Activated naive CD4-positive, alpha-beta T cell treated with anti-CD3 and anti-CD28 coated beads for 36 hours (primary cell): ENCODE measurements at regions of chr2 and their contacts with region 1.

Region 1: DNA sequence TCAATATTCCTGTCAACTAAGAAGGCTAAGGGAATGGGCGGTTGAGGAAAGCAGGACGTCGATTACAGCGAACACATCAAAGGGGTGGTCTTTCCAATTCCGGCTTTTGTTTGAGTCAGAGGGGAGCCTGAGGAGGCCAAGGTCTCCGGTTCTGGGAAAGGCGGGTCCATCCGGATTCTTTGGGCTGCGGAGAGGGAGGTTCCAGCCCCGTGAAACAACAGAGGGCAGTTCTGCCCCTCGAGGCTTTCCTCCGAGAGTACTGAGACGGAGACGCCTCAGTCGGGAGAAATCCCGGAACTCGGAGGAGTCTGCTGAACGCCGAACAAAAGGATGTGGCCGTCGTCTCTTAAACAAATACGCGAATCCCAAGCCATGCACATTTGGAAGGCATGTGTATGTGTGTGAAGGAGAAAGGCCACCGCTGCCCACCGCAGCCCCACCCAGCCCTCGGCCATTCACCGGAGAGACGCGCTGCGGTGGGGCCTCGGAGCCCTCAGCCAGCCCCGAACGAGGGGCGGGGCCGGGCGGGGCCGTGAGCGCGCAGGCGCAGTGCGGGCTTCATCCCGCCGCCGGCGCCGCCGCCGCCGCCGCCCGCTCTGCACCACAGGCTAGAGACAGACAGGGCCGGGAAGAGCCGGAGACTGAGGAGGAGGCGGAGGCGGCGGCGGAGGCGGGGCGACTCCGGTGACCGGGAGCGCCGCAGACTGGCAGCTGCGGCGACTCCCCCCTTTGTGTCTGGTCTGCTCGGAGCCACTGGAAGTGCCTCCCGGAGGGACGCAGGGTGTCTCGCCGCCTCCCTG is at the start of gene BMPR2:
- DNase-seq: peak; percentile 79
- H3K4me3 Mint-ChIP-seq: peak within 1 kb of the TSS; percentile 96
- H3K27ac Mint-ChIP-seq: peak within 1 kb of the TSS; percentile 71
- H3K4me1 Mint-ChIP-seq: peaks cover 20% of the 10 kb centered on the region
- H3K27me3 Mint-ChIP-seq: no peaks in the 10 kb centered on the region
- total RNA-seq, gene BMPR2: 4.2 to 5.5 TPM

Region 2: DNA sequence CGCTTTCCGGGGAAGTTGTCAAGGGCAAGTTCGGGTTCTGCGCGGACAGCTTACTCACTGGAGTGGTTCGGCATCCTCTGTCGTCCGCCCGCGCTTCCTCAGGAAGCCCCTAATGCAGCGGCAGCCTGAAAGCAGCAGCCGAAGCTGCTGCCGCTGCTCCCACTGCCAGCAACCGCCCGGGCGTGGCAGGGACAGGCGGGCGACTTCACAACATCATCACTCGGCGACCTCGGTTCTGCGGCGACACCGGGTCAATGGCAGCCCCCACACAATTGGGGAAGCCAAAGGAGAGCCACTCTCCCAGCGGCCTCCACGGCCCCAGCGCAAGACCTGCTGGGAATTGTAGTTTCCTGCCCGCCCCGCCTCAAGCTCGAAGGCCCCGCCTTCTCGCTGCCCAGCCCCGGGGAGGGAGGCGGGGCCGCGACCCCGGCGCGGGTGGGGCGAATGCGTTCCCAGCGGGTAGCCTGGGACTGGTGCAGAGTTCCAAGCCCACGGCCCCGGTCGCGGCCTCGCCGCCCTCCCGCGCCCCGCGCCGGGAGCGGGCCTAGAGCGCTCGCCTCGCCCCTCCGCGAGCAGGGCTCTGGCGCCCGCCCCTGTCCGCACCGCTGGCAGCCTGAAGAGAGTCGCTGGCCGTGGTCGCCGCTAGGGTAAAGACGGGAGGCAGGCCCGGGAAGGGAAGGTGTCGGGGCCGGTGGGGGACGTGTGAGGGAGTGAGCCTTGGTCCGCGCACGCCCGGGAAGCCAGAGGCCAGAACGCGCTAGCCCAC is 924.3 kb before region 1 on chr2 and contains the starts of genes STRADB and TRAK2:
- CTCF ChIA-PET with region 1: no interaction called
- intact Hi-C with region 1: loop called (anchors 2 kb)
- DNase-seq: peak; percentile 96
- H3K4me3 Mint-ChIP-seq: peak within 1 kb of the TSS; percentile 95
- H3K27ac Mint-ChIP-seq: peak within 1 kb of the TSS; percentile 94
- H3K4me1 Mint-ChIP-seq: peaks cover 51% of the 10 kb centered on the region
- H3K27me3 Mint-ChIP-seq: no peaks in the 10 kb centered on the region
- total RNA-seq, gene STRADB: 17.6 to 19.1 TPM
- total RNA-seq, gene TRAK2: 10.4 TPM

Region 3: GRCh38 chr2:201484805-201485204 is 891.0 kb before region 1 on chr2:
- CTCF ChIA-PET with region 1: no interaction called
- intact Hi-C with region 1: no loop called
- DNase-seq: no peak
- H3K4me3 Mint-ChIP-seq: no peak overlapping the region
- H3K27ac Mint-ChIP-seq: no peak overlapping the region
- H3K4me1 Mint-ChIP-seq: no peaks in the 10 kb centered on the region
- H3K27me3 Mint-ChIP-seq: no peaks in the 10 kb centered on the region

Region 4: GRCh38 chr2:202033321-202034248 is 342.2 kb before region 1 on chr2 and contains the start of gene FZD7:
- CTCF ChIA-PET with region 1: no interaction called
- intact Hi-C with region 1: loop called (anchors 1 kb)
- DNase-seq: peak; percentile 90
- H3K4me3 Mint-ChIP-seq: peak within 1 kb of the TSS; percentile 79
- H3K27ac Mint-ChIP-seq: no peak within 1 kb of the TSS
- H3K4me1 Mint-ChIP-seq: peaks cover 12% of the 10 kb centered on the region
- H3K27me3 Mint-ChIP-seq: peaks cover 18% of the 10 kb centered on the region
- total RNA-seq, gene FZD7: 0.17 to 0.43 TPM

Region 5: GRCh38 chr2:202072226-202072625 is 303.6 kb before region 1 on chr2:
- CTCF ChIA-PET with region 1: no interaction called
- intact Hi-C with region 1: no loop called
- DNase-seq: no peak
- H3K4me3 Mint-ChIP-seq: no peak overlapping the region
- H3K27ac Mint-ChIP-seq: no peak overlapping the region
- H3K4me1 Mint-ChIP-seq: no peaks in the 10 kb centered on the region
- H3K27me3 Mint-ChIP-seq: no peaks in the 10 kb centered on the region

Region 6: GRCh38 chr2:202278944-202279343 is 96.9 kb before region 1 on chr2:
- CTCF ChIA-PET with region 1: no interaction called
- intact Hi-C with region 1: loop called (anchors 1 kb)
- DNase-seq: no peak
- H3K4me3 Mint-ChIP-seq: no peak overlapping the region
- H3K27ac Mint-ChIP-seq: peak overlapping the region; percentile 92
- H3K4me1 Mint-ChIP-seq: peaks cover 51% of the 10 kb centered on the region
- H3K27me3 Mint-ChIP-seq: no peaks in the 10 kb centered on the region

Region 7: GRCh38 chr2:202353430-202353829 is 22.4 kb before region 1 on chr2:
- CTCF ChIA-PET with region 1: no interaction called
- intact Hi-C with region 1: no loop called
- DNase-seq: no peak
- H3K4me3 Mint-ChIP-seq: no peak overlapping the region
- H3K27ac Mint-ChIP-seq: no peak overlapping the region
- H3K4me1 Mint-ChIP-seq: no peaks in the 10 kb centered on the region
- H3K27me3 Mint-ChIP-seq: no peaks in the 10 kb centered on the region

Region 8: DNA sequence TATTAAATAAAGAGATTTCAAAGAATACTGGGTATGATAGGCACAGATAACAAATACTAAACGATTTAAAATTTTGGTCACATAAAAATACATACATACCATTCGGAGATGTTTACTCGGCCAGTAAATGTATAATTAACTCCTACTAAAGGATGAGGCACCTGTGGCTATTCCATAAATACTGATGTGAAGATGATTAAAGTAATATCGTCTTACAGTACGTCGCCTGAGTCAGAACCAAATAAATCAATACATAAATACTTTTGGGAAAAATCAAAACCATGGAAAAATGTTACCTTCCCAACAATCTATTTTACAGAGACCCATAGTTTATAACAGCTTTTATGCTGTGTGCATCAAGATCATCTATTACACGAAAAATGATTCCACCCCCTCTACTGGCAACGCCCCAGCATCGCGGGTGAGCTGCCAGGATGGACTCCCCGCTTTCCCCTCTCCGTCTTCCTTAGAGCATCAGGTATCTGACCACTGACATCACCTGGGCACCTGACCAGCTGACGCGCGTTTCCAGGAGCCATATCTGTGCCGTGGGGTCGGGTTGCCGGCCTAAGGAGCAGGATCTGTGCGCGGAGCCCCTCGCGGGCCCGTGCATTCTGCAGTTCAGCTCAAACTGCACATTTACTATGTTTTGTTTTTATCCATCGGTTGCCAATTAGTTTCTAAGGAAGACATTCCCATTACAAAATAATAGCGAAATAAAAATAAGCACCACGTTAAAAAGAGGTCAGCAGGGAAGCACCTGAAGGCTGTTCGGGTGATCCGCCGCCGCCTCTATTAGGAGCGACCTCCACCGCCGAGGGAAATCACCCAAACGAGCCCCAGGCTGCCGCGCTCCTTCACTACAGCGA is 494.9 kb after region 1 on chr2:
- CTCF ChIA-PET with region 1: no interaction called
- intact Hi-C with region 1: loop called (anchors 5 kb)
- DNase-seq: peak; percentile 85
- H3K4me3 Mint-ChIP-seq: peak overlapping the region; percentile 88
- H3K27ac Mint-ChIP-seq: peak overlapping the region; percentile 72
- H3K4me1 Mint-ChIP-seq: peaks cover 7% of the 10 kb centered on the region
- H3K27me3 Mint-ChIP-seq: no peaks in the 10 kb centered on the region

Region 9: GRCh38 chr2:203014456-203015199 is 638.8 kb after region 1 on chr2 and contains the start of gene NBEAL1:
- CTCF ChIA-PET with region 1: no interaction called
- intact Hi-C with region 1: loop called (anchors 1 kb)
- DNase-seq: peak; percentile 97
- H3K4me3 Mint-ChIP-seq: peak within 1 kb of the TSS; percentile 95
- H3K27ac Mint-ChIP-seq: peak within 1 kb of the TSS; percentile 74
- H3K4me1 Mint-ChIP-seq: peaks cover 27% of the 10 kb centered on the region
- H3K27me3 Mint-ChIP-seq: no peaks in the 10 kb centered on the region
- total RNA-seq, gene NBEAL1: 7.9 to 8.3 TPM